HepG2 (cell line): ENCODE measurements at regions of chr4 and their contacts with region 1.

Region 1: DNA sequence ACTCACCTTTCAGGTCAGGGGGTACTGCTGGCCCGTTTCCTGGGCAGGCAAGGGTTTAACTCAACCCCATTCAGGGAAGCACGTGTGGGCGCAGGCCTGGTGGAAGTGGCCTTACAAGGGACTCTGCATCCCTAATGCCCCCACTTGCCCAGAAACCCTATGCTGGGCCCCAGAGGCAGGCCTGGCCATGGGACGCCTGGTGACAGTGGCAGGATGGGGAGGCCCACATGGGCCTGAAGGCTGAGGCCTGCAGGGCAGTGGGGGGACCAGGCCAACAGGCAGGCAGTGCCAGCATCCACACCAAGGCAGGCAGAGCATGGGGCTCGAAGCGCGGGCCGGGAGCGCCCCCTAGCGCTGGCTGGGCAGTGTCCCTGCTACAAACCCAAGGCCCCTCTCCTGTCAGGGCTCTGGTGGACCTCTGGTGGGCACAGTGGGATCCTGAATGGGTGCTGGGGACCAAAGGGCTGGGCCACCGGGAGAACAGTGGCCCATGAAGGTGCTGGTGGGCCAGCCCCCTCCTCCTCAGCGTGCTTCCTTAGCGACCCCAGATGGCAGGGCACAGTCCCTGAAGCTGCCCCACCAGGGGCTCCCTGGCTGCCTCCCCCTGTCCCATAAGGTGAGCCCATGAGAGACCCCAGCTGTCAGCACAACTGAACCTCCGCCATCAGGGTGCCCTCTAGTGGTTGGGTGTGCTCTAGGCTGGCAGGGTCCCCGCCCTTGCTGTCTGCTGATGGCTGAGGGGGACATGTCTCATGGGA is 16.8 kb downstream of the FGFR3 start:
- DNase-seq: peak; percentile 86
- ATAC-seq: peak; percentile 87
- H3K4me3 ChIP-seq: no peak overlapping the region
- H3K27ac ChIP-seq: peak overlapping the region; percentile 24
- H3K4me1 ChIP-seq: peaks cover 20% of the 10 kb centered on the region
- H3K27me3 ChIP-seq: no peaks in the 10 kb centered on the region
- CTCF ChIP-seq: peak; percentile 94
- EP300 ChIP-seq: no peak
- POLR2A ChIP-seq: no peak
- RAD21 ChIP-seq: peak; percentile 99

Region 2: DNA sequence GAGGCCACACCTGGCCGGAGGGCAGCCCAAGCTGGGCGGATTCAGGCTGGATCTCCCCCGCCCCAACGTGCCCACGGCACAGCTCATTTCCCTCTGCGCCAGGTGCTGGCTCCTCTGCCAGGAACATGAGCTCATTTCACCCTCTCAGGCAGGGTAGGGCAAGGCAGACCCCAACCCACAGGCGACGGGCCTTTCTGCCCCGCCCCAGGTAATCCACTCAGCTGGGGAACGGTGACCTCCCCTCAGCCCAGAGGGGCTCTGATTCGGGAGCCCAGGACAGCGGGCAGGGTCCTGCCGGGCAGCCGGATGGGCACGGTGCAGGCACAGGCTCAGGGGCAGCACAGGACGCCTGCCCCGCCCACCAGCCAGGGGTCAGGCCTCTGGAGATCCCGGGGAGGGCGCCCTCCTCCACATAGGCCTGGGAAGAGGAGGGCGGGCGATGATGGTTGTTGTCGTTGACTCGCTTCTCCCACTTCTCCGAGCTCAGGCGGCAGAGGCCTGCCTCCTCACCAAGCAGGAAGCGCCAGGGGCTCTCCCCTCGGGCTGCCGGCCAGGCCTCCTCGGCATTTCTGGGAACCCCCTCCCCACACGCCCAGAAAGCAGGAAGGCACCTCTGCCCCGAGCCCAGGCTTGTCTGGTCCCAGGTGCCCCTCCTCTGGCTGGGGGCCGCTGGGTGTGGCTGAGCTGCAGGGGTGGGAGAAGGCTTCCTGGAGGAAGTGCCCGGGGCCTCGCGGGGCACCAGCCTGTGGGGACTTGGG is 57.5 kb before region 1 on chr4:
- CTCF ChIA-PET with region 1: interaction called, 179 read pairs
- POLR2A ChIA-PET with region 1: interaction called, 45 read pairs
- in situ Hi-C with region 1: loop called (anchors 10 kb)
- intact Hi-C with region 1: no loop called
- DNase-seq: peak; percentile 69
- ATAC-seq: peak; percentile 60
- H3K4me3 ChIP-seq: peak overlapping the region; percentile 45 to 73 (median 56)
- H3K27ac ChIP-seq: peak overlapping the region; percentile 12
- H3K4me1 ChIP-seq: peaks cover 90% of the 10 kb centered on the region
- H3K27me3 ChIP-seq: no peaks in the 10 kb centered on the region; a peak in 1 of 5 replicates
- CTCF ChIP-seq: peak; percentile 68
- EP300 ChIP-seq: no peak
- POLR2A ChIP-seq: no peak
- RAD21 ChIP-seq: no peak

Region 3: GRCh38 chr4:1777822-1778641 is 31.9 kb before region 1 on chr4:
- CTCF ChIA-PET with region 1: interaction called, 15 read pairs
- POLR2A ChIA-PET with region 1: interaction called, 14 read pairs
- in situ Hi-C with region 1: no loop called
- intact Hi-C with region 1: loop called (anchors 5 kb)
- DNase-seq: peak; percentile 81
- ATAC-seq: peak; percentile 39
- H3K4me3 ChIP-seq: peak overlapping the region; percentile 36 to 67 (median 44); a peak in 5 of 6 replicates
- H3K27ac ChIP-seq: peak overlapping the region; percentile 86
- H3K4me1 ChIP-seq: peaks cover 97% of the 10 kb centered on the region
- H3K27me3 ChIP-seq: no peaks in the 10 kb centered on the region
- CTCF ChIP-seq: peak; percentile 67
- EP300 ChIP-seq: peak in 1 of 2 experiments; percentile 35; a peak in 1 of 4 replicates
- POLR2A ChIP-seq: no peak
- RAD21 ChIP-seq: no peak

Region 4: GRCh38 chr4:1792832-1793495 is 17.0 kb before region 1 on chr4 and contains the start of gene FGFR3:
- CTCF ChIA-PET with region 1: interaction called, 13 read pairs
- POLR2A ChIA-PET with region 1: interaction called, 119 read pairs
- in situ Hi-C with region 1: no loop called
- intact Hi-C with region 1: loop called (anchors 2 kb)
- DNase-seq: peak; percentile 48
- ATAC-seq: peak; percentile 31
- H3K4me3 ChIP-seq: peak within 1 kb of the TSS; percentile 94 to 98 (median 95)
- H3K27ac ChIP-seq: peak within 1 kb of the TSS; percentile 92
- H3K4me1 ChIP-seq: peaks cover 71% of the 10 kb centered on the region
- H3K27me3 ChIP-seq: peaks cover 8 to 22% of the 10 kb centered on the region in 2 experiments; a peak in 4 of 5 replicates
- CTCF ChIP-seq: no peak
- EP300 ChIP-seq: no peak
- POLR2A ChIP-seq: peak in 1 of 2 experiments; percentile 82; a peak in 2 of 4 replicates
- RAD21 ChIP-seq: peak; percentile 30; the same call in 1 of the 2 replicates
- total RNA-seq, gene FGFR3: 40.2 and 103 TPM in 2 replicates